CD8-positive, alpha-beta memory T cell (primary cell): ENCODE measurements at regions of chr2 and their contacts with region 1.

Region 1: DNA sequence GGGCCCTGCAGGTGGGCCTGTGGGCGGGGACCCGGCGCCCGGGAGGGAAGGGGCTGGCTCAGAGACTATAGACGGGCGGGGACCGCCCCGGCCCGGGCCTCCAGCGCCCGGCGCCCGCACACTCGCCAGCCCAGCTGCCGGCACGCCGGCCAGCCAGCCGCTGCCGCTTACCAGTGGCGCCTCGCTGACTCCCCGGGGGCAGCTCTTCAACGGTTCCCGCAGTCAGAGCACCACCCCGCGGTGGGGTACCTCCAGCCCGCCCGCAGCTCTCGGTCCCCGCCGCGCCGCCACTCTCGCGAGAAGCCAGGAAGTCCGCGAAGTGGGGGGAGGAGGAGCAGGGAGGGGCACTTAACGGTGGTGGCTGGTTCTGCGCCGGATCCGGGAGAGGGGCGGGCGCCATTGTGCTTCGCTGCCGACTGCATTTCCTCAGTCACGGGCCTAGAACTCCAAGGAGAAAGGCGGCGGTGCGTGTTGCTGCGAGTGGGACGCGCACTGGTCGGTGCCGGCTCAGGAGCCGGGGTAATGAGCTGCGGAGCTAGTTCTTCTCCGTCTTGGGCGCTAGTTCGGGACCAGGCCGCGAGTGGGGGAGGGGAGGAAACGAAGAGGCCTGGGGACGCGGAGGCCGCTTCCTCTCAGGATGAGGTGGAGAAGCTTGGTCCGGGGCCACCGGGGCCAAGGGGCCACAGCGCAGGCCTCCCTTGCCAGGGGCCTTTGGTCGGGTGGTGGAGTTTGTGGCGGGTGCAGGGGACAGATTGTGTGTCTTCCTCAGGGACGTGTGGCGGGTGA is at the start of gene MARCHF7:
- DNase-seq: peak; percentile 94 to 99 (median 98)
- H3K4me3 ChIP-seq: peak within 1 kb of the TSS; percentile 75
- H3K4me3 Mint-ChIP-seq: peak within 1 kb of the TSS; percentile 99 to 100 (median 100)
- H3K27ac ChIP-seq: peak within 1 kb of the TSS; percentile 96
- H3K27ac Mint-ChIP-seq: peak within 1 kb of the TSS; percentile 99 to 100 (median 100)
- H3K4me1 ChIP-seq: peaks cover 46% of the 10 kb centered on the region
- H3K4me1 Mint-ChIP-seq: peaks cover 52 to 64% (median 56%) of the 10 kb centered on the region in 3 donors
- H3K27me3 ChIP-seq: no peaks in the 10 kb centered on the region
- H3K27me3 Mint-ChIP-seq: peaks cover 0 to 6% of the 10 kb centered on the region in 2 donors
- total RNA-seq, gene MARCHF7: 84.7 to 92.3 TPM

Region 2: GRCh38 chr2:159516241-159516766 is 196.0 kb before region 1 on chr2:
- CTCF ChIA-PET with region 1: interaction called, 5 read pairs
- POLR2A ChIA-PET with region 1: interaction called, 19 read pairs
- DNase-seq: peak in 4 of 5 donors; percentile 5 to 68 (median 56)
- H3K4me3 ChIP-seq: peak overlapping the region; percentile 83
- H3K4me3 Mint-ChIP-seq: peak overlapping the region; percentile 74 to 92 (median 79)
- H3K27ac ChIP-seq: peak overlapping the region; percentile 89
- H3K27ac Mint-ChIP-seq: peak overlapping the region; percentile 66 to 96 (median 89)
- H3K4me1 ChIP-seq: peaks cover 20% of the 10 kb centered on the region
- H3K4me1 Mint-ChIP-seq: peaks cover 32 to 42% (median 42%) of the 10 kb centered on the region in 3 donors
- H3K27me3 ChIP-seq: no peaks in the 10 kb centered on the region
- H3K27me3 Mint-ChIP-seq: no peaks in the 10 kb centered on the region